ENCODE measurements at regions of chr11 and their contacts with region 1.

Region 1: GRCh38 chr11:17730608-17731462 is 3.7 kb upstream of the KCNC1 start:
- DNase-seq: peak; percentile 85 to 89 (median 88)
- H3K4me3 ChIP-seq: no peak overlapping the region
- H3K27ac ChIP-seq: no peak overlapping the region
- H3K4me1 ChIP-seq: peaks cover 0 to 2% (median 0%) of the 10 kb centered on the region in 3 donors
- H3K27me3 ChIP-seq: peaks cover 6% of the 10 kb centered on the region
- CTCF ChIP-seq: peak; percentile 83

Region 2: GRCh38 chr11:17978553-17979287 is 247.9 kb after region 1 on chr11:
- intact Hi-C with region 1: loop called (anchors 5 kb)
- DNase-seq: peak in 4 of 5 donors; percentile 31 to 56 (median 44)
- H3K4me3 ChIP-seq: no peak overlapping the region
- H3K27ac ChIP-seq: no peak overlapping the region
- H3K4me1 ChIP-seq: no peaks in the 10 kb centered on the region
- H3K27me3 ChIP-seq: no peaks in the 10 kb centered on the region
- CTCF ChIP-seq: peak; percentile 70